PC-9 (cell line): ENCODE measurements at regions of chr7 and their contacts with region 1.

Region 1: DNA sequence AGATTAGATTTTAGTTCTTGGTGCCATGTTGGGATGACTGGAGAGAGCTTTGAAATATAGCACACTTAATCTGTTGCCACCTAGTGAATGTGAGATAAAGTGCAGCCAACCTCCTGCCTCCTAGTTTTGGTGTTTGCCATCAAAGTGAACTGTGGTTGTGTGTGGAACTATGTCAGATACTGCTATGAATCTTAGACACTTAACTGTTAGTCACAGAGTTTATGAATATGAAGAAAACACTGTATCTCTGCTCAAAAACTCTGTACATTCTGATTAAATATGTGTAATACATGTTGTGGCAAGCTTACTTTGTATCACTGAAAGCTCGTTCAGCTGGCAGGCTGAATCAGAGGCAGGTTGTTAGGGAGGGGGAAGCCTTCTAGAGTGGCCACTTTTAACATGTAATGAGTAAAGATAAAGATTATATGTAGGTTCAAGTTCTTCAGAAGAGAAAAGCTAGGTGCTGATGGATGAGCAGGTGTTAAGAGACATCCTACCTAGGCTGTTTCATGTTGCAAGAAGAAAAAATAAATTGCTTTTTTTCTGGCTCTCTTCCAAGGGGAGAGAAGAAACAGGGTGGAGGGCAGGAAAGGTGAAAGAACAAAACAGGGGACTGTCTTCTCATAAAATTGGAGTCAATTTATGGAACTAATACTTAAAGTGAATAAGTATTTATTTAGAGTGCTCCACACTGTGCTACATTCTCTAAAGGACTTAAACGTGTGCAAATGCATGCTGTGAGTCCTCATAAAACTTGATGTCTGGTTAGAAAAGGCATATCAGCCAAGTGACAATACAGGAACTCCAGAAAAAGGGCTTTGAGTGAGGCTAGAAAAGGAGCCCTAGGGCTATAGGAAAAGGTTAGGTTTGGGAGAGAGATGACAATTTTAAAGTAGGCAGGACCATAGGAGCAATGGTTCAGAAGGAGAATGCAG is 14.1 kb upstream of the LAMB1 start:
- DNase-seq: no peak
- H3K4me3 ChIP-seq: no peak overlapping the region
- H3K27ac ChIP-seq: no peak overlapping the region
- H3K4me1 ChIP-seq: peaks cover 44% of the 10 kb centered on the region
- H3K27me3 ChIP-seq: no peaks in the 10 kb centered on the region
- CTCF ChIP-seq: peak; percentile 59

Region 2: GRCh38 chr7:107982918-107983389 is 34.2 kb before region 1 on chr7:
- CTCF ChIA-PET with region 1: no interaction called
- POLR2A ChIA-PET with region 1: interaction called, 22 read pairs
- intact Hi-C with region 1: no loop called
- DNase-seq: no peak
- H3K4me3 ChIP-seq: no peak overlapping the region
- H3K27ac ChIP-seq: no peak overlapping the region
- H3K4me1 ChIP-seq: no peaks in the 10 kb centered on the region
- H3K27me3 ChIP-seq: no peaks in the 10 kb centered on the region
- CTCF ChIP-seq: no peak

Region 3: DNA sequence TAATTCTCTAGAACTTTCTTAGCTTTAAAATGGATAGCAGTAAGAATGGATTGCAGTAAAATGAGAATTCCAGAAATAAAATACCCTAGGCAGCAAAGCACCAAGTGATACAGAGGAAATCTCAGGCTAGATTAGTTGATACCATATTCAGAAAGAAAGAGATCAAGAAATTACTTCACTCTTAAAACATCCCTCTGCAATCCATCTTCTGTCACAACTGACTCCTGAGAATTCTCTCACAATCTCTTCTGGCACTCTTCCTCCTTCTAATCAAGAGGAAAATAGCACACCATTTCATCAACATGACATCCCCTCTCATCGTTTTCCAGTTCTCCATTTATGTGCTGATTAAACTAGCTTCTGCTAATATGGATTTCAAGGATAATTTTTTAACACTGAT is 28.0 kb after region 1 on chr7:
- CTCF ChIA-PET with region 1: interaction called, 16 read pairs
- POLR2A ChIA-PET with region 1: interaction called, 7 read pairs
- intact Hi-C with region 1: no loop called
- DNase-seq: no peak
- H3K4me3 ChIP-seq: no peak overlapping the region
- H3K27ac ChIP-seq: no peak overlapping the region
- H3K4me1 ChIP-seq: no peaks in the 10 kb centered on the region
- H3K27me3 ChIP-seq: no peaks in the 10 kb centered on the region
- CTCF ChIP-seq: no peak

Region 4: DNA sequence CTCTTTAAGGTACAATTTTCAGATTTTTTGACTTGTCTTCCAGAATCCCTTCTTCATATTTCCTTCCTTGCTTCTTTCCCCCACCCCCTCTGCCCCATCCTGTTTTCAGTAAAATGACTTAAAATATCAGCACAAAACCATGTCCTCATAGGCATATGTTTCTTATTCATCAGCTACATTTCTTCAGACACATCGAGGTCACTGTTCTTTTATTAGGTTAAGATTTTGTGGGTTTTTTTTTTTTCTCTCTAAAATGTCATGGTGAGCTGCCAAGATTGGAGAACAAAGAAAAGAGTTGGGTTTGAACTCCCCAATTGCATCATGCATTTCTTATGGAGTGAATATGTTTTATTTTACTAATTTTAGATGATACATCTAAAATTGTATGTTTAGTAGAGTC is 77.2 kb after region 1 on chr7:
- CTCF ChIA-PET with region 1: no interaction called
- POLR2A ChIA-PET with region 1: interaction called, 17 read pairs
- intact Hi-C with region 1: no loop called
- DNase-seq: no peak
- H3K4me3 ChIP-seq: no peak overlapping the region
- H3K27ac ChIP-seq: no peak overlapping the region
- H3K4me1 ChIP-seq: peaks cover 10% of the 10 kb centered on the region
- H3K27me3 ChIP-seq: no peaks in the 10 kb centered on the region
- CTCF ChIP-seq: no peak